H1 (cell line): ENCODE measurements at regions of chr9 and their contacts with region 1.

Region 1: GRCh38 chr9:15135164-15135792 is 171.7 kb downstream of the TTC39B start:
- DNase-seq: peak in 1 of 2 experiments; percentile 73
- H3K4me3 ChIP-seq: no peak overlapping the region
- H3K27ac ChIP-seq: no peak overlapping the region
- H3K4me1 ChIP-seq: peaks cover 2 to 21% (median 18%) of the 10 kb centered on the region in 4 experiments; a peak in 5 of 7 replicates
- H3K27me3 ChIP-seq: no peaks in the 10 kb centered on the region
- CTCF ChIP-seq: peak; percentile 4 to 93 (median 91)
- EP300 ChIP-seq: no peak
- POLR2A ChIP-seq: no peak
- RAD21 ChIP-seq: peak; percentile 93 to 95

Region 2: DNA sequence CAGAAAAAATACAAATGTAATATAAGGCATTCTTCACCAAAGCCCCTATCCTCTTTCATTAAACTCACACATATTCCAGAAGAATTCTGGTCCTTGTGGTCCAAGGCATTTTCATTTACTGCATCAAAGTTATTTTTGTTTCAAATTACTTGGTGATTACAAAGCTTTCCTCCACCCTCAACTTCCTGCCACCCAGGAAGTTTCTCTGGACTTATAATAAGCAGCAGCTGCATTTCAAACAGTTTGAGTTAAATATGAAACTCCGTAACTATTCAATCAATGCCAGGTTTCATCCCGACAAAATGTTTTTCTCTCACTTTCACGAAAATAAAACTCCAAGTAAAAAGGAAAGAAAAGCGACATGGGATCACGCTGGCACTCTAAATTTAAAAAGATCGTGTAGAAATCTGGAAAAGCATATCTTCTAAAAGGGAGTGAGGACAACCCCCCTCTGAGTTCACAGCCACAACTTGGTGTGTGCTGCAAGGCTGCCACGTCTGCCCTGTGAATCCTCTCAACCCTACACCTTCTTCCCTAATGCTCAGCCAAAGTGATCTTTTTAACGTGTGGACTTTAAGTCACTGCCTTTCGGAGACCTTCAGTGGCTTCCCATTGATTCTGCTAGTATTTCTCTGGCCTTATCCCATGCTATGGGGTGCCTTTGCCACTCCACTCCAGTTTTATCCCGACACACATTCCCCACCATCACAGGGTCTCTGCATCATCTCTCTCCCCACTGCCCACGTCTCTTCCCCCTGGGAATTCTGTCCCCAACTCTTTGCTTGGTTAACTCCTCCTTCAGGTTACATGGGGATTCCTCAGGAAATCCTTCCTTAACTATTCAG is 321.7 kb before region 1 on chr9:
- CTCF ChIA-PET with region 1: no interaction called
- POLR2A ChIA-PET with region 1: no interaction called
- DNase-seq: no peak
- H3K4me3 ChIP-seq: no peak overlapping the region
- H3K27ac ChIP-seq: no peak overlapping the region
- H3K4me1 ChIP-seq: no peaks in the 10 kb centered on the region
- H3K27me3 ChIP-seq: no peaks in the 10 kb centered on the region
- CTCF ChIP-seq: no peak
- EP300 ChIP-seq: no peak
- POLR2A ChIP-seq: no peak
- RAD21 ChIP-seq: no peak

Region 3: GRCh38 chr9:15116130-15116580 is 19.1 kb before region 1 on chr9:
- CTCF ChIA-PET with region 1: interaction called, 14 read pairs
- POLR2A ChIA-PET with region 1: interaction called, 3 read pairs
- DNase-seq: no peak
- H3K4me3 ChIP-seq: no peak overlapping the region
- H3K27ac ChIP-seq: no peak overlapping the region
- H3K4me1 ChIP-seq: peaks cover 2 to 10% (median 3%) of the 10 kb centered on the region in 4 experiments; a peak in 4 of 7 replicates
- H3K27me3 ChIP-seq: no peaks in the 10 kb centered on the region
- CTCF ChIP-seq: no peak
- EP300 ChIP-seq: no peak
- POLR2A ChIP-seq: no peak
- RAD21 ChIP-seq: no peak

Region 4: DNA sequence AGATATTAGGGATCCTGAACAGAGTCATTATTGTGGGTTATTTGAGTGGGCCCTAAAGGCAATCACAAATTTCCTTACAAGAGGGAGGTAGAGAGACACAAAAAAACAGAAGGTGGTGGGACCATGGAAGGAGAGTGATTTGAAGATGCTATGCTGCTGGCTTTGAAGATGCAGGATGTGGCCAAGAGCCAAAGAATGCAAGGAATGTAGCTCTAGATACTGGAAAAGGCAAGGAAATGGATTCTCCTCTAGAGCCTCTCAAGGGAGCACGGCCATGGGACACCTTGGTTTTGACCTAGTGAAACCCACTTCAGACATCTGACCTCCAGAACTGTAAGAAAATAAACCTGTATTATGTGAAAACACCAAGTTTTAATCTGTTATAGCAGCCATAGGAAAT is 117.9 kb after region 1 on chr9:
- CTCF ChIA-PET with region 1: no interaction called
- POLR2A ChIA-PET with region 1: no interaction called
- DNase-seq: no peak
- H3K4me3 ChIP-seq: no peak overlapping the region
- H3K27ac ChIP-seq: no peak overlapping the region
- H3K4me1 ChIP-seq: peaks cover 0 to 8% (median 0%) of the 10 kb centered on the region in 4 experiments; a peak in 3 of 7 replicates
- H3K27me3 ChIP-seq: no peaks in the 10 kb centered on the region
- CTCF ChIP-seq: no peak
- EP300 ChIP-seq: no peak
- POLR2A ChIP-seq: no peak
- RAD21 ChIP-seq: no peak

Region 5: GRCh38 chr9:15552636-15553527 is 417.6 kb after region 1 on chr9 and contains the start of gene CCDC171:
- CTCF ChIA-PET with region 1: no interaction called
- POLR2A ChIA-PET with region 1: no interaction called
- DNase-seq: peak; percentile 88
- H3K4me3 ChIP-seq: peak within 1 kb of the TSS; percentile 80 to 92 (median 81)
- H3K27ac ChIP-seq: peak within 1 kb of the TSS; percentile 81
- H3K4me1 ChIP-seq: peaks cover 0 to 2% (median 1%) of the 10 kb centered on the region in 4 experiments; a peak in 1 of 7 replicates
- H3K27me3 ChIP-seq: no peaks in the 10 kb centered on the region
- CTCF ChIP-seq: no peak
- EP300 ChIP-seq: no peak
- POLR2A ChIP-seq: peak; percentile 66 to 82
- RAD21 ChIP-seq: no peak
- total RNA-seq, gene CCDC171: 1.9 and 2.3 TPM in 2 replicates